ENCODE measurements at regions of chr17 and their contacts with region 1.

Region 1: DNA sequence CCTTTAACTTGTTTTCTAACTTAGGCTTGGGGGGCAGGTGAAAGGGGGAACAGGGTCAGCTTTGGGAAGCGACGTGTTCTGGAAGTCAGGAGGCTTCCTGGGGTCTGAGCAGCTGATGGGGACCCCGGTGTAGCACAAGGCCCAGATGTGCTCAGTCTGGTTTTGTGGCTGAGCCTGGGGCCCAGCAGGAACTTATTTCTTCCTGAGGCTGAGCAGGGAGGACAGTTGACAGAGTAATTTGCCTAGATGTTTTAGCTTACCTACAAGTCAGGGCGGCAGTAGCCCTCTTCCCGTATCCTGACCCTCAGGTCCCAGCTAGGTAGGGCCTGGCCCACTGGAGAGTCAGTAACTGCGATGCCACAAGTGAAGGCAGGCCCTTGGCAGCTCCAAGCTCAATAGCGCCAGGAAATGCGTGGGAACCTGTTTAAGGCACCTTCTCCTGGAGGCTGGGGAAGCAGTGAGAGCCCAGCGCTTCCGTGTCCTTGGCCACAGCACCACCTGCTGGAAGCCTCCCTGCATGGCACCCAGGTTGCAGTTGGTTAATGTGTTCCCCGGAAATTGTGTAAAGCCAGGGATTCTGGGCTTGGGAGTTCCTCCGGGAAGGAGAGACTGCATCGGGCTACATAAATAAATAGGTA is 5.2 kb downstream of the CCR7 start:
- DNase-seq: peak; percentile 88
- H3K4me3 ChIP-seq: no peak overlapping the region
- H3K27ac ChIP-seq: no peak overlapping the region
- H3K4me1 ChIP-seq: peaks cover 18% of the 10 kb centered on the region
- H3K27me3 ChIP-seq: peaks cover 15 to 27% of the 10 kb centered on the region in 2 experiments
- CTCF ChIP-seq: peak; percentile 97
- POLR2A ChIP-seq: no peak

Region 2: DNA sequence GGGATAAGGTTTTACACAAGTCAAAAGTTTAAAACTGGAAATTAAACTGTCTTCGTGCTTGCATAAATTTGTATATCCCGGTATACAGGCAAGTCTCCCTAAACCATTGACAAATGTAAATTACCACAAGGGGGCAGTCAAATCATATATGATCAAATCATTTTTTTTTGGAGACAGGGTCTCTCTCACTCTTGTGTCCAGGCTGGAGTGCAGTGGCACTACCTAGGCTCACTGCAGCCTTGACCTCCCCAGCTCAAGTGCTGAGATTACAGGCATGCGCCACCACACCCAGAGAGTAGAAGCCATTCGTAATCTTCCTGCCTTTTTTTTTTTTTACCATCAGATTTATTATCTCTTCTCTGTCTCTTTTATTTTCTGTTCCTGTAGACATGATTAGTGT is 160.9 kb before region 1 on chr17:
- CTCF ChIA-PET with region 1: interaction called, 4 read pairs
- POLR2A ChIA-PET with region 1: no interaction called
- dilution Hi-C with region 1: no loop called
- intact Hi-C with region 1: loop called (anchors 1 kb)
- DNase-seq: no peak
- H3K4me3 ChIP-seq: no peak overlapping the region
- H3K27ac ChIP-seq: no peak overlapping the region
- H3K4me1 ChIP-seq: no peaks in the 10 kb centered on the region
- H3K27me3 ChIP-seq: no peaks in the 10 kb centered on the region
- CTCF ChIP-seq: peak; percentile 35 to 44
- POLR2A ChIP-seq: no peak

Region 3: DNA sequence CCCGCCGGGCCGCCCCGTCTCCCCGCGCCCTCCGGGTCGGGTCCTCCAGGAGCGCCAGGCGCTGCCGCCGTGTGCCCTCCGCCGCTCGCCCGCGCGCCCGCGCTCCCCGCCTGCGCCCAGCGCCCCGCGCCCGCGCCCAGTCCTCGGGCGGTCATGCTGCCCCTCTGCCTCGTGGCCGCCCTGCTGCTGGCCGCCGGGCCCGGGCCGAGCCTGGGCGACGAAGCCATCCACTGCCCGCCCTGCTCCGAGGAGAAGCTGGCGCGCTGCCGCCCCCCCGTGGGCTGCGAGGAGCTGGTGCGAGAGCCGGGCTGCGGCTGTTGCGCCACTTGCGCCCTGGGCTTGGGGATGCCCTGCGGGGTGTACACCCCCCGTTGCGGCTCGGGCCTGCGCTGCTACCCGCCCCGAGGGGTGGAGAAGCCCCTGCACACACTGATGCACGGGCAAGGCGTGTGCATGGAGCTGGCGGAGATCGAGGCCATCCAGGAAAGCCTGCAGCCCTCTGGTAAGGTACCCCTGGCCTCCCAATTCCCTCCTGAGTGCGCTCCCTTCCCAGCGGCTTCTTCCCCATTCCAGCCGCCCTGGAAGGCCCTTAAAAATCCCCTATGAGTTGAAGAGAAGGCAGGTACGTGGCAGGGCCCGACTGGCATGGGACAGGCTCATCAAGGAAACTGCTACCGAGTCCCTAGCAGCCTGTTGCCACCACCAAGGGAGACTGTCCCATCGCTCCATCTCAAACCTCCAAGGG is 116.3 kb before region 1 on chr17:
- CTCF ChIA-PET with region 1: interaction called, 19 read pairs
- POLR2A ChIA-PET with region 1: no interaction called
- dilution Hi-C with region 1: no loop called
- intact Hi-C with region 1: loop called (anchors 1 kb)
- DNase-seq: peak; percentile 69
- H3K4me3 ChIP-seq: peak overlapping the region; percentile 51 to 92 (median 58)
- H3K27ac ChIP-seq: peak overlapping the region; percentile 43
- H3K4me1 ChIP-seq: peaks cover 40% of the 10 kb centered on the region
- H3K27me3 ChIP-seq: no peaks in the 10 kb centered on the region
- CTCF ChIP-seq: peak; percentile 45 to 76
- POLR2A ChIP-seq: no peak

Region 4: DNA sequence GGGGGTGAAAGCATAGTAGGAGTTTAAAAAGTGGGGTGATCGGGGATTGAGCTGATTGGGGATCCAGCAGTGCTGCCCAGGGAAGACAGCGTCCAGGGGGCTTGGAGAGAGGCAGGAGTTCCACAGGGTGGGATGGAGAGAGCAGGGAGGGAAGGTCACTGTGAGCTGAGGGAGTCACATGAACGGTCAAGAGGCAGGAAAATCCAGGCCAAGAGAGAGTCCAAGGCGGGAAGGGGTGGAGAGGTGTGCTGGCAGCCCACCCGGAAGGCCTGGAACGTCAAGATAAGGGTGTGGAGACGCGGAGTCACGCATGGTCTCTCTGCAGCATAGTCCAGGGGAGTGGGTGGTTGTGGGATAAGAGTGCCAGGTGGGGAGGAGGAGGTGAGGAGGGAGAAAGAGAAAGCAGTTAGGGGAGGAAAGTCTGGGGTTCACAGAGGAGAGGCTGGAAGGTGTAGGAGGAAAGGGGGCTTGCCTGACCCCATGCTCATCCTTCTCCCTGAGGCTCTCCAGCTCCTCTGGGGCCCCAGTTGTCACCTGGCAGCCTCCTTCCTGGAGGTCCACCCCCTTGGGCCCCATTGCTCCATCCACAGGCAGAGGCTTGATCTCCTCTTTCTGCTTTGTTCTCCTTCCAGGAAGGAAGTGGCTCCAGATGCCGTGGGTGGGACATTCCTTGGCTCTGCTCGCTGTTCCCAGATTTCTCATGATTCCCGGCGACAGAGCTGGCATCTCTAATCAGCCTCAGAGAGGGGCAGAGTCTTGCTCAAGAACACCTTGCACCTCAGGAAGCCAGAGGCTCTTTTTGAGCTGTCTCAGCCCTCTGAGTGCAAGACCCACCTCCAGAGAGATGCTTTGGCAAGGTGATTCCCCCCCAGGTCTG is 23.5 kb before region 1 on chr17:
- CTCF ChIA-PET with region 1: interaction called, 304 read pairs
- POLR2A ChIA-PET with region 1: interaction called, 3 read pairs
- dilution Hi-C with region 1: no loop called
- intact Hi-C with region 1: loop called (anchors 1 kb)
- DNase-seq: peak; percentile 91
- H3K4me3 ChIP-seq: no peak overlapping the region
- H3K27ac ChIP-seq: peak overlapping the region; percentile 70
- H3K4me1 ChIP-seq: peaks cover 43% of the 10 kb centered on the region
- H3K27me3 ChIP-seq: no peaks in the 10 kb centered on the region
- CTCF ChIP-seq: no peak
- POLR2A ChIP-seq: peak; percentile 53

Region 5: DNA sequence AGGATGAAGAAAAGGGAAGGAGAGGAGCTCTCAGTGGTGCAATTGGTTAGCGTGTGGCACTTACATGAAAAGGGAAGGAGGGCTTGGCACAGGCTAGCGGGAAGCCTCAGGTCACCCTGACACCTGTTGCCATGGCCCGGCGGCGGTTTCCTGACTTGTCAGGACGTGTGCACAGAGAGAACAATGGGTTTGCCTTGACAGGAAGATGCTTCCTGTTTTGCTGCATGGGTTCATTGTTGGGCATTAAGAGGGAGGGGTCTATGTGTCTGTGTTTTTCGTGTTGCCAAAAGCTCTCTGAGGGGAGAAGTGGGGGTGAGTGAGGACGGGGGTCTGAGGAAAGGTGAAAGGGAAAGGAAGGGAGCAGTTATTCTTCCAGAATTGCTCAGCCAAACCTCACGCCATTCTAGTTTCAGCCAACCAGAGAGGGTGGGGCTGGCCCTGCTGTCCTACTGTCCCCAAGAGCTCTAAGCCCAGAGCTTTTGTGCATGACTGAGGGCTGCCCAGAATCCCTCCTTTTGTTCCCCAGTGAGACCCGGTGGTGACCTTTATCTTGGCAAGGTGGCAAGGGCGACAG is 22.3 kb after region 1 on chr17:
- CTCF ChIA-PET with region 1: interaction called, 8 read pairs
- POLR2A ChIA-PET with region 1: no interaction called
- dilution Hi-C with region 1: no loop called
- intact Hi-C with region 1: loop called (anchors 1 kb)
- DNase-seq: peak; percentile 97
- H3K4me3 ChIP-seq: no peak overlapping the region
- H3K27ac ChIP-seq: peak overlapping the region; percentile 74
- H3K4me1 ChIP-seq: peaks cover 18% of the 10 kb centered on the region
- H3K27me3 ChIP-seq: peaks cover 2 to 5% of the 10 kb centered on the region in 2 experiments
- CTCF ChIP-seq: no peak
- POLR2A ChIP-seq: no peak

Region 6: DNA sequence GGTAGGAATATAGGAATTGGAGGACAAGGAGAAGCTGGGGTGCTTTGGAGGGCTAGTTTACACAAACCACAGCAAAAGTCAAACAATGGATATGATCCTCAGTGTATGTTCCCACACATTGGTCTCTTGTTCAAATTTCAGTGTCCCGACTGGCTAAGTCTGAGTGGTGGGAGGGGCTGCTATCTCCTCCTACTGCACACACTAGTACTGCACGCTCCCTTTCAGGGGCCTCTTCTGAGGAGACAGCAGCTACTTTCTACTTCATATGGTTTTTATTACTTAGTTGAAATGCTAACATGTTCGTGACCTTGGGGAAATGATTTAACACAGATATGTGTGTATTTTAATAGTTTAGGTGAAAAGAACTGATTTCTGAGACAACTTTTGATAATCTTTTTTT is 281.2 kb after region 1 on chr17:
- CTCF ChIA-PET with region 1: no interaction called
- POLR2A ChIA-PET with region 1: no interaction called
- dilution Hi-C with region 1: no loop called
- intact Hi-C with region 1: no loop called
- DNase-seq: no peak
- H3K4me3 ChIP-seq: no peak overlapping the region
- H3K27ac ChIP-seq: no peak overlapping the region
- H3K4me1 ChIP-seq: no peaks in the 10 kb centered on the region
- H3K27me3 ChIP-seq: peaks cover 4 to 13% of the 10 kb centered on the region in 2 experiments
- CTCF ChIP-seq: no peak
- POLR2A ChIP-seq: no peak